Activated B cell treated with CpG ODN at 0.5 μM for 24 hours (primary cell): ENCODE measurements at regions of chr10 and their contacts with region 1.

Region 1: DNA sequence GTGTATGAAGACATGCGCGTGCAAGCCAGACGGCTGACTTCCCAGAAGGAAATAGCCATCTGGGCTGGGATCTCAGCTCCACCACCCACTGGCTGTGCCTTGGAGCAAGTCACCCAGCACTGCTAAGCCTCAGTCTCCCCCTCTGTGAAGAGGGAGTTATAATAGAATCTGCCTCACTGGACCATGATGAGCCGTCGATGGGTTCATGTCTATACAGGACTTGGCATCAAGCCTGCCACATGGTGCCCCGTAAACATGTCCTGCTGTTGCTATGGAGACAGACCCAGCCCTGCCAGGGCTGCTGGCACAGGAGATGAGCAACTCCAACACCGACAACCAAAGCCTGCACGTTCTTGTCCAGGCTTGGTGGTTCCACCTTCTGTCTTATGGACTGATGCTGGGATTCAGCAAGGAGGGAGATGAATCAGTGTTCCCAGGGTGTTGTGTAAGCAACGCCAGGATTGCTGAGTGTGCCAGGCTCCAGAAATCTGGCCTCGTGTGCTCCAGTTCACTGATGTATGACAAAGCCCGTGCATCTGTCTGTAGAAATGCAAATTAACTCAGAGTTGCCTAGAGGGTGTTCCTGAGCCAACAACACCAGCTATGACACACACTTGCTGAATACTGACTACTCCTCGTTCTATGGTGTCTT is 5.6 kb downstream of the GPR15LG start:
- DNase-seq: peak; percentile 34
- ATAC-seq: peak; percentile 90
- H3K4me3 Mint-ChIP-seq: no peak overlapping the region
- H3K27ac Mint-ChIP-seq: no peak overlapping the region
- H3K4me1 Mint-ChIP-seq: peaks cover 6% of the 10 kb centered on the region
- H3K27me3 Mint-ChIP-seq: no peaks in the 10 kb centered on the region
- CTCF ChIP-seq: no peak

Region 2: DNA sequence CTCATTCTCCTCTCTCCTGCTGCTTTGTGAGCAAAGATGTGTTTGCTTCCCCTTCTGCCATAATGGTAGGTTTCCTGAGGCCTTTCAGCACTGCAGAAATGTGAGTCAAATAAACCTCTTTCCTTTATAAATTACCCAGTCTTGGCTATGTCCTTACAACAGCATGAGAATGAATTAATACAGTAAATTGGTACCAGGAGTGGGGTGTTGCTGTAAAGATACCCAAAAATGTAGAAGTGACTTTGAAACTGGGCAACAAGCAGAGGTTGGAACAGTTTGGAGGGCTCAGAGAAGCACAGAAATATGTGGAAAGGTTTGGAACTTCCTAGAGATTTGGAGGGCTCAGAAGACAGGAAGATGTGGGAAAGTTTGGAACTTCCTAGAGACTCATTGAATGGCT is 428.6 kb before region 1 on chr10:
- CTCF ChIA-PET with region 1: no interaction called
- POLR2A ChIA-PET with region 1: no interaction called
- intact Hi-C with region 1: no loop called
- DNase-seq: no peak
- ATAC-seq: no peak
- H3K4me3 Mint-ChIP-seq: no peak overlapping the region
- H3K27ac Mint-ChIP-seq: no peak overlapping the region
- H3K4me1 Mint-ChIP-seq: no peaks in the 10 kb centered on the region
- H3K27me3 Mint-ChIP-seq: no peaks in the 10 kb centered on the region
- CTCF ChIP-seq: no peak

Region 3: GRCh38 chr10:84156768-84157167 is 22.4 kb before region 1 on chr10:
- CTCF ChIA-PET with region 1: no interaction called
- POLR2A ChIA-PET with region 1: no interaction called
- intact Hi-C with region 1: loop called (anchors 2 kb)
- DNase-seq: no peak
- ATAC-seq: peak; percentile 94
- H3K4me3 Mint-ChIP-seq: no peak overlapping the region
- H3K27ac Mint-ChIP-seq: peak overlapping the region; percentile 21
- H3K4me1 Mint-ChIP-seq: peaks cover 18% of the 10 kb centered on the region
- H3K27me3 Mint-ChIP-seq: peaks cover 2% of the 10 kb centered on the region
- CTCF ChIP-seq: no peak

Region 4: GRCh38 chr10:84194424-84195040 is 15.3 kb after region 1 on chr10 and contains the start of gene CDHR1:
- CTCF ChIA-PET with region 1: no interaction called
- POLR2A ChIA-PET with region 1: no interaction called
- intact Hi-C with region 1: loop called (anchors 2 kb)
- DNase-seq: peak; percentile 34
- ATAC-seq: peak; percentile 80
- H3K4me3 Mint-ChIP-seq: peak within 1 kb of the TSS; percentile 60
- H3K27ac Mint-ChIP-seq: no peak within 1 kb of the TSS
- H3K4me1 Mint-ChIP-seq: peaks cover 7% of the 10 kb centered on the region
- H3K27me3 Mint-ChIP-seq: peaks cover 39% of the 10 kb centered on the region
- CTCF ChIP-seq: no peak
- total RNA-seq, gene CDHR1: 2.8 and 3.7 TPM in 2 replicates

Region 5: DNA sequence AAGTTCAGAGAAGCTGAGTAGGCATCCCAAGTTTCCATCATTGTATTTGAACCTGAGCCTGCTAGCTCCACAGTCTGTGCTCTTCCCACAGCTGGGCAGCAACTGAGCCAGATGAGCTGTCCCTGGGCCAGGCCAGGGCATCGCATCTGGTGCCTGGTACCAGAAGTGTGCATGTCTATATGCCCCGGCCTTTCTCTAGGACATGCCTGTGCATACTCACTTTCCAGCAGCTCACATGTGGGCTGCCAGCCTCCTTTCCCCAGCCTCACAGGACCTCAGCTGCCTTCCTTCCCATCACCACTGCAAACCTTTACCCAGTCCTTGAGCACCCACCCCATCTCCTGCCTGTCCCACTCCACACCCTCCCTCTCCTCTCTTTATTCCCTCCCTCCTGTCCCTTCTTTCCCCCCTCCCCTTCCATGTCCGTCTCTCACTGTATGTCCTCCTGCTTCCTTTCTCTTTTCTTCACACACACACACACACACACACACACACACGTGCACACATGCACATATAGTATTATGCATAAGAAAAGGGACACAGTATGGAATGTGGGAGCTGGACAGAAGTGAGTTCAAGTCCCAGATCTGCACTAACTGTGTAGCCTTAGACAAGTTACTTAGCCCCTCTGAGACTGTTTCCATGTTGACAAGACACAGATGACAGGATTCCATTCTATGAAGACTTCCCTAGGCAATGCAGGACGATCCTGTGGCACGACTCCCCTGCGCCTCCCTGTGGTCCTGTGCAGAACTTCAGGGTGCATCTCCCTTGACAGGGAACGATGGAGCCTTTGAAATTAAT is 26.1 kb after region 1 on chr10:
- CTCF ChIA-PET with region 1: no interaction called
- POLR2A ChIA-PET with region 1: no interaction called
- intact Hi-C with region 1: loop called (anchors 2 kb)
- DNase-seq: peak; percentile 49
- ATAC-seq: peak; percentile 88
- H3K4me3 Mint-ChIP-seq: no peak overlapping the region
- H3K27ac Mint-ChIP-seq: no peak overlapping the region
- H3K4me1 Mint-ChIP-seq: no peaks in the 10 kb centered on the region
- H3K27me3 Mint-ChIP-seq: peaks cover 13% of the 10 kb centered on the region
- CTCF ChIP-seq: no peak